Gastrocnemius medialis (tissue), 4 donors: ENCODE measurements at regions of chr22 and their contacts with region 1.

Region 1: GRCh38 chr22:45615364-45615763 is 56.3 kb upstream of the ATXN10 start:
- DNase-seq: no peak
- ATAC-seq: no peak
- H3K4me3 ChIP-seq: no peak overlapping the region
- H3K27ac ChIP-seq: no peak overlapping the region
- H3K4me1 ChIP-seq: peaks cover 0 to 4% of the 10 kb centered on the region in 2 donors
- H3K27me3 ChIP-seq: no peaks in the 10 kb centered on the region
- CTCF ChIP-seq: no peak
- POLR2A ChIP-seq: no peak

Region 2: DNA sequence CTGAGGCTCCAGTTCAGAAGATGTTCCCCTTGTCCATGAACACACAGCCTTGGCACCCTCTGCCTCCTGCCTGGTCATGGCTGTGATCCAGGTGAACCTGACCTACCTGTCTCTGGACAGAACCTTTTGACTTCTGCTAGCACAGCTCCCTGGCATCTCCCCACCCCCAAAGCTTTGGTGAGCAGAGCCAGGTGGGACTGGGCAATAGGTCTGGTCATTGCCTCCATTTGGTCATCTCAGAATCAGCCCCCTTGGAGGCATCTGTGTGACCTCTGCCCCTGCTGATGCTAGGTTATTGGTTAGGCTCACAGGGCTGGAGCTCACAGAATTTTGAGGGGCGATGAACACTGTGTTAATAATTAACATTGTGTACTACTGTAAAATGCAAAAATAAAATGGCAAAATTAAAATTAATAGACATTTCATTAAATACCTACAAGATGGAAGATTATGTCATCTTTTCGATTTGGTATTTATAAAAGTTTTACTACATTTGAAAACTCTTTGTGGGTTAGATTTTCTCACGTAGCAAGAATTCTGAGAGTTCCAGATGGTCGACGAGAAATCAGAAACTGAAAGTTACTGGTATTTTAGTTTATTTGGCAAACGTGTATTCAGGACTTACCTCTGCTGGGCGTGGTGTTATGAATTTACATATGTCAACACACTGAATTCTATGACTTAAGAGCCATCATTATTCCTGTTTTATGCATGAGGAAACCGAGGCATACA is 366.4 kb before region 1 on chr22:
- in situ Hi-C with region 1: no loop called
- intact Hi-C with region 1: no loop called
- DNase-seq: no peak
- ATAC-seq: no peak
- H3K4me3 ChIP-seq: no peak overlapping the region
- H3K27ac ChIP-seq: no peak overlapping the region
- H3K4me1 ChIP-seq: no peaks in the 10 kb centered on the region
- H3K27me3 ChIP-seq: no peaks in the 10 kb centered on the region
- CTCF ChIP-seq: no peak
- POLR2A ChIP-seq: no peak

Region 3: GRCh38 chr22:45878051-45878781 is 262.9 kb after region 1 on chr22:
- in situ Hi-C with region 1: no loop called
- intact Hi-C with region 1: no loop called
- DNase-seq: no peak
- ATAC-seq: no peak
- H3K4me3 ChIP-seq: no peak overlapping the region
- H3K27ac ChIP-seq: no peak overlapping the region
- H3K4me1 ChIP-seq: peaks cover 4 to 5% of the 10 kb centered on the region in 2 donors
- H3K27me3 ChIP-seq: peaks cover 46 to 58% (median 52%) of the 10 kb centered on the region in 3 donors
- CTCF ChIP-seq: no peak
- POLR2A ChIP-seq: no peak

Region 4: DNA sequence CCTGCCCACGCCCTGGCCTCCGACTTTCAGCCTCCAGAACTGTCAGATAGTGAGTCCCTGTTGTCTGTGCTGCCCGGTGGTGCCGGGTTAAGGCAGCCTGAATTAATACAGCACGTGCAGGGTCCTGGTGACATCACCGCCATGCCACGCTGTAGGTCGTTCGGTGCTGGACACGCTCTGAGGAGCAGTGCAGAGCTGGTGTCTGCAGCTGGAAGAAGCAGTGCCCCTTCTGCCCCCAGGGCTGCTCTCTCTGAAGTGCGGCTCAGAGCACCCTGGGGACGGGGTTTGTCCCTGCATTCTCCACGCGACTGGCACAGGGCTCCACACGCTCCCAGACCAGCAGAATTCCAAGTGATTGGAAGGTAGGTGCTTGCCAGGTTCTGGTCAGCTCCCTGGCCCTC is 1978.5 kb after region 1 on chr22:
- in situ Hi-C with region 1: loop called (anchors 5 kb)
- intact Hi-C with region 1: no loop called
- DNase-seq: no peak
- ATAC-seq: no peak
- H3K4me3 ChIP-seq: no peak overlapping the region
- H3K27ac ChIP-seq: no peak overlapping the region
- H3K4me1 ChIP-seq: no peaks in the 10 kb centered on the region
- H3K27me3 ChIP-seq: no peaks in the 10 kb centered on the region
- CTCF ChIP-seq: no peak
- POLR2A ChIP-seq: no peak